ENCODE measurements at regions of chr1 and their contacts with region 1.

Region 1: DNA sequence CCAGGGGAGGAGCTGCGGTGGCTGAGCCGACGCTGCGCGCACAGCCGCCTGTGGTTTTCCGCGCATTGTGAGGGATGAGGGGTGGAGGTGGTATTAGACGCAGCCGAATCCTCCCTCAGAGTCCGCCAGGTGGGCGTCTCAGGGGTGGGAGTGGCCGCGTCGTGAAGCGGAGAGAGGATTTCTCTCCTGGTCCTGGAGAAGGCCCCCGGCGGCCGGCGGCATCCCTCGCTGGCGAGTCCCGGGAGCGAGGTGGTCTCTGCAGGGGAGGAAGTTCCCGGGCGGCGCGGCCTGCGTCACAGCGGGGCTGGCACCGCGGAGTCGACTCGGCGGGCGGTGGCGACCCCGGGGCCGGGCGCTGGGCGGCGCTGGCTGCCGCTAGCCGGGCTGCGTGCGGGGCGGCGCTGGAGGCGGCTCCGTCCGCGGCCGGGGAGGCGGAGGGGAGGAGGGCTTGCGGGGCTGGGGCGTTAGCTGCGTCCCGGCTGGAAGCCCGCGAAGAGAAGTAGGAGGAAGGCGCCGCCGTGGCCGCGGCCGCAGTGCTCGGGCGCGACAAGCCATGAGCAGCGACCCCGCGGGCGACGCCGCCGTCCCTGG is at the start of gene LRRC8C:
- DNase-seq: peak; percentile 67 to 87
- H3K4me3 ChIP-seq: peak within 1 kb of the TSS; percentile 76
- H3K4me1 ChIP-seq: peaks cover 12% of the 10 kb centered on the region
- H3K27me3 ChIP-seq: no peaks in the 10 kb centered on the region

Region 2: GRCh38 chr1:89310505-89310904 is 322.2 kb before region 1 on chr1:
- in situ Hi-C with region 1: no loop called
- DNase-seq: no peak
- H3K4me3 ChIP-seq: no peak overlapping the region
- H3K4me1 ChIP-seq: no peaks in the 10 kb centered on the region
- H3K27me3 ChIP-seq: no peaks in the 10 kb centered on the region

Region 3: GRCh38 chr1:89589515-89589914 is 43.2 kb before region 1 on chr1:
- in situ Hi-C with region 1: no loop called
- DNase-seq: no peak
- H3K4me3 ChIP-seq: no peak overlapping the region
- H3K4me1 ChIP-seq: peaks cover 67% of the 10 kb centered on the region
- H3K27me3 ChIP-seq: no peaks in the 10 kb centered on the region

Region 4: DNA sequence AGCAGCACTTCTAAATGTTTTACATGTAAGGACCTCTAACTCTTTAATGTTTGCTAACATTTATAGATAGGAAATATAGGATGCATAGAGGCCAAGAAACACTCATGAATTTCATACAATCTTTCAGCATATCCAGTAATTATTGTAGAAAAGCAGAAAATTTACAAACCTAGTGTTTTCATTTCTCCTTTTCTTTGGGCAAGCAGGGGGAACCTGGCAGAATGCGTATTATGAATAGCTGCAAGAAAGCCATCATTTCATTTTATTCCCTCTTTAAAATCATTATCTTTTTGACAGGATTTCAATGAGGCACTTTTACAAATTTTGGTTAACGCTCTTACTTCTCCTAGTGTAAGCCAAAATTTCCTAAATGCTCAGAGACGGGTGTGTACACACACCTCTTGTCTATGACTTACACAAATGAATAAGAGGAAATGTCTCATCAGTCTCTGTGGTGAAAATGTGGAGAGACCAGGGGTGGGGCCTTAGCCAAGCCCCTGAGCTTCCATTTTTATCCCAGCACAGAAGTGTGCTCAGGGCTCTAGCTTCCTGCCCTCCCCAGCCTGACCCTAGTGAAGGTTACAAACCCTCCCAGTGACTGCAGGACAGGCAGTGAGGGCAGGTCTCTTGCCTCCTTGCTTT is 91.7 kb after region 1 on chr1:
- in situ Hi-C with region 1: no loop called
- DNase-seq: no peak
- H3K4me3 ChIP-seq: no peak overlapping the region
- H3K4me1 ChIP-seq: peaks cover 9% of the 10 kb centered on the region
- H3K27me3 ChIP-seq: no peaks in the 10 kb centered on the region

Region 5: DNA sequence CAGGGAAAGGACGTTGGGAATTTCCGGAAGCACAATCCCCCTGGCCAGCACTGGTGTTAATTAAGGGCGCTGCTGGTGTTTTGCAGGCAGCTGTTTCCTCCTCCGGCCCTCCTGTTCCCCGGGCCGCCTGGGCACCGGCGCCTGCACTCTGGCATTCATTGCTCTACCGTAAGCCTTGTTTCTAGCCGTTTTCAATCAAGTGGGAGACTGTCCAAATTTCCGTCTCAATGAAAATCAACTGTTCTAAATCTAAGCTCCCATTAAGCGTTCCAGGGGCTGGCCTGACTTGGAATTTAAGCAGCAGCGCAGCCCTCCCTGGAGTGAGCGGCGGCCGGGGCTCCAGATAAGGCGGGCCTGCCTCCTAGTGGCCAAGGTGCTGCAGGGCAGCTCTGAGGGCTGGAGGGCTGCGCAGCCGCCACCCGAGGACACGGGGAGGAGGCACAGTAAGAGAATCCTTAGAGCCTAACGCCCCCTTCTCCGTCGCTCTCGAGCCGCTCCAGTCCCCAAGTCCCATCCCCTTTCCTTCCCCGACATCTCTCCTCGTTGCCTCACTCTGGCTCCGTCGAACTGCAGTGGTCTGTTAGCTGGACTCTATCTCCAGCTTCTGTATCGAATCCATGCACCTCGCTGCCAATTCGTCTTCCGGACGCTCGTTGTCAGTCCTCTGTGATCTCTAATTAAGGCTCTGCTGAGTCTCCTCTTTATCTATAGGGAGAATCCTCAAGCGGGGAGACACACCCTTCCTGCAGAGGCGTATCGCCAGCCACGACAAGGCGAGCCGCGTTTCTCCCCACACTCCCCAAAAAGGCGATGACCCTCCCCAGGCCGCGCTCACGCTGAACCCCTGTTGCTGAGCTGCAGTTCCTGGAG is 130.3 kb after region 1 on chr1:
- in situ Hi-C with region 1: loop called (anchors 5 kb)
- DNase-seq: peak; percentile 68 to 93
- H3K4me3 ChIP-seq: peak overlapping the region; percentile 22
- H3K4me1 ChIP-seq: peaks cover 4% of the 10 kb centered on the region
- H3K27me3 ChIP-seq: peaks cover 13% of the 10 kb centered on the region

Region 6: DNA sequence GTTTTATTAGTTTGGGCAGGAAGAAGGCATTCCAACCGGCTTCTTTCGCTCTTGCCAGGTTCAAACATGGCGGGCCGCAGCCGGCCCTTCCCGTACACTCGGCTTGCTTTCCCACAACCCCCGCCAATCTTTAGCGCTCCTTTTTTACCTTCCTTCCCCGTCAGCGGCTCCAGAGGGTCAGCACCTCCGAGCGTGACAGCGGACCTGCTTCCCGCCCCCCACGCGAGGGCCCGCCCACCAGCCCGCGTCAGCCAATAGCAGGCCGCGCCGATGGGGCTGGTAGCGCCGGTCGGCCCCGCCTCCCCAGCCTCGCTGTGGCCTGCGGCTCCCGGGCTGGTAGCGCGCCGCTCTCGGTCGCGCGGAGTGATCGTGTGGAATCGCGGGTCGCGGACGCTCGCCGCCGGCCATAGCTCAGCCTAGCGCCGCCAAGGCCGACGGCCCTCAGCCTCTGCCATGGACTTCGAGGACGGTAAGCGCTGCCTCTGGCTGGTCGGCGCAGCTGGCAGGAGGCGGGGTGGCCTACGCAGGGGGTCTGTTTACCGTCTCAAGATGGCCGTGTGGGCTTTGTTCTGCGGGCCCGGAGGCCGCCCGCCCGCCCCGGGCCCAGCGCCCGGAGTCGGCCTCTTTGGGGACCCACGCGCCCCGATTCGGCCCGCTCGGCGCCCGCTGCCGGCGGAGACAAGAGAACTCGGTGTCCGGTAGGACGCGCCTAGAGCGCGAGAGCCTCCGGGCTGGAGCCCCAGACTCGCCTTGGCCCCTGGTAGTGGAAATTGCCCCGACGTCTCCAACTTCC is 362.2 kb after region 1 on chr1 and contains the start of gene ZNF326:
- in situ Hi-C with region 1: loop called (anchors 25 kb)
- DNase-seq: peak; percentile 94 to 98
- H3K4me3 ChIP-seq: peak within 1 kb of the TSS; percentile 80
- H3K4me1 ChIP-seq: peaks cover 23% of the 10 kb centered on the region
- H3K27me3 ChIP-seq: no peaks in the 10 kb centered on the region

Measured in HAP-1 (cell line).